GM13976 (cell line): ENCODE measurements at regions of chr7 and their contacts with region 1.

Region 1: DNA sequence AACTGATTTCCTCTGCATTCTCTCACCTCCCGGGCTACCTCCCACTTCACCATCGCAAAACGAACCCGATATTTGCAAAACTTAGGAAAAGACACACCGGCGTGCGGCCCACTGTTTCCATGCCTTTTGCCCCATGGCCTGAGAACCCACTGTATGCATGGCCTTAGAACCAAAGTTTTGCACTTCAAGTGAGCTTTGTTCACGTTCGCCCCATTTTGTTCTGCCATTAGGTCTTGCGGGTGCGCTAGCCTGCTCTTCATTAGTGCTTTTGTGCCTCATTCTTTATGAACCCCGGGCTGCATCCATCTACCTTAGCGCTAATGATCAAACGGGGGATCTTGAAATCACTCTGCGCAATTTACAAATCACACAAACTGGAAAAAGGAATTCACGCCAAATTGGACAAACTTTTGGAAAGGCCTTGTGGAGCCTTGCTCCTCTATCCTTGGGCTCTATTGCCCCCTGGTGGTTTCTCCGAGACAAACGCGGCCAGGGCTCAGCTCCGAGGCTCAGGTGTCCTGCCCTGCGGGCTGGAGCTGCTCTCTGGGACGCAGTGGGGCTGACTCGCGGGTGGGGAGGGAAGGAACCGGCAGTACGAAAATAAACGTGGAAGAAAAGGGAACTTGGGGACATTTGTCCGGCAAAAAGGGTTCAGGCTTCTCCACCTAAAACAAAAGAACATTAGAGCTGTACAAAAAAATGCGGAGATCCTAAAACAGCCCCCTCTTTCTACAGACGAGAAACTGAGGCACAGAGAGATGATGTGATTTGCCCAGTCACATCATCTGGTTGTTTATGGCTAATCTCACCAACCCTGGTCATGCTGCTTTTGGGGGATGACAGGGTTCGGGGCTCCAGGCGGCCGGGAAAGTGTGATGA is 300.4 kb upstream of the NFE2L3 start:
- DNase-seq: peak; percentile 66
- CTCF ChIP-seq: peak; percentile 70

Region 2: GRCh38 chr7:25389489-25390106 is 462.0 kb before region 1 on chr7:
- in situ Hi-C with region 1: loop called (anchors 25 kb)
- DNase-seq: peak; percentile 20
- CTCF ChIP-seq: peak; percentile 21

Region 3: GRCh38 chr7:25578991-25579777 is 272.4 kb before region 1 on chr7:
- in situ Hi-C with region 1: loop called (anchors 10 kb)
- DNase-seq: no peak
- CTCF ChIP-seq: no peak

Region 4: GRCh38 chr7:26005683-26006400 is 154.3 kb after region 1 on chr7:
- in situ Hi-C with region 1: no loop called
- DNase-seq: no peak
- CTCF ChIP-seq: no peak